ENCODE measurements at regions of chr11 and their contacts with region 1.

Region 1: GRCh38 chr11:33857933-33858371 is 33.9 kb downstream of the LMO2 start:
- DNase-seq: peak in 9 of 10 donors; percentile 48 to 78 (median 65)
- H3K4me3 ChIP-seq: peak overlapping the region in 1 of 59 donors; percentile 4
- H3K27ac ChIP-seq: peak overlapping the region in 1 of 59 donors; percentile 32
- H3K27me3 ChIP-seq: peaks cover 0 to 7% (median 0%) of the 10 kb centered on the region in 45 donors
- CTCF ChIP-seq: peak; percentile 64 to 96 (median 90)

Region 2: DNA sequence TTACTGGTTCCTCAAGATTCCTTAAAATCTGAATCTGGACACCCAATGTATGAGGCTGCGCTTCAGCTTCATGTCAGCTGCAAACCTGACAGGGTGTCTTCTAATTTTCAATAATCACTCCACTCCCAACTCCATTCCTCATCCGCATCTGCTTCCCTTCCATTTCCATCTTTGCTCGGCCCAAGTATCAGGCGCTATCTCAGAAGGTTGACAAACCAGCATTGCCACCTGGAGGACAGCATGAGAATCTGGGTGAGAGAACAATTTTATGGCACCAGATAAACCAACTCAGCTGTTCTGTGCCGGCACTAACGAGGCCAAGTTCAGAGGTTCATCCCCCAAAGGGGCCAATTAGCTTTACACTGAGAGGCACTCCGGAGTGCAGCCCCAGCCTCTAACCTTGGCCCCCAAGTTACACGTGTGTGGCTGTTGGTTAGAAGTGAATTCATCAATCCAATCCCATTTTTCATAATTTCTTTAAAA is 113.1 kb after region 1 on chr11:
- intact Hi-C with region 1: loop called in 1 of 2 experiments (anchors 2 kb)
- DNase-seq: peak in 3 of 10 donors; percentile 18 to 41 (median 21)
- H3K4me3 ChIP-seq: no peak overlapping the region
- H3K27ac ChIP-seq: peak overlapping the region in 1 of 59 donors; percentile 3
- H3K27me3 ChIP-seq: no peaks in the 10 kb centered on the region
- CTCF ChIP-seq: peak; percentile 22 to 76 (median 56)

Region 3: DNA sequence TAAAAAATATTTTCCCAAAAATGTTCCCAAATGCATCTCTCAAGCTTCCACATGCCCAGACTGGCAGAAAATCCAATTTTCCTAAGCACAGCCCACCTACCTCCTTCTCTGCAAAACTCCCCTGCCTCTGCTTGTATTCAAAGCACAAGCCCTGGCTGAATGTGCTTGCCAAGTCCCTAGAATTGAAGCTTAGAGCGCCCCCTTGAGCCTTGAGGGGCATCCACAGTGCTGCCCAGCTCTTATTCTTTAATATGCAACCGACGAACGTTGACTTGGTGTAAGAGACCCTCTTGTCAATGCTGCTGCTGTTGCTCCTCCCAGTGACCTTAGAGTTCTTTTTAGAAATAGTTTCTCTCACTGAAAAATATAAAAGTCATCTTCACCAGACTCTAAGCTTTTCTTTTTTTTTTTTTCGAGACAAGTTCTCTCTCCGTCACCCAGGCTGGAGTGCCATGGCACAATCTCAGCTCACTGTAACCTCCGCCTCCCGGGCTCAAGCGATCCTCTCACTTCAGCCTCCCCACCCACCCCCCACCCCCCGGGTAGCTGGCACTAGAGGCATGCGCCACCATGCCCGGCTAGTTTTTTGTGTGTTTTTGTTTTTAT is 130.1 kb after region 1 on chr11:
- intact Hi-C with region 1: loop called in 1 of 2 experiments (anchors 1 kb)
- DNase-seq: peak; percentile 41 to 77 (median 64)
- H3K4me3 ChIP-seq: no peak overlapping the region
- H3K27ac ChIP-seq: no peak overlapping the region
- H3K27me3 ChIP-seq: no peaks in the 10 kb centered on the region
- CTCF ChIP-seq: peak; percentile 65 to 93 (median 82)

Measured in dorsolateral prefrontal cortex (tissue), 120 donors.